ENCODE measurements at regions of chr18 and their contacts with region 1.

Region 1: GRCh38 chr18:59402432-59403090 is 43.5 kb upstream of the LMAN1 start:
- DNase-seq: peak; percentile 88
- ATAC-seq: peak; percentile 100
- H3K4me3 Mint-ChIP-seq: no peak overlapping the region
- H3K27ac Mint-ChIP-seq: no peak overlapping the region
- H3K4me1 Mint-ChIP-seq: peaks cover 5% of the 10 kb centered on the region
- H3K27me3 Mint-ChIP-seq: peaks cover 8% of the 10 kb centered on the region
- CTCF ChIP-seq: peak; percentile 71

Region 2: GRCh38 chr18:59200787-59201186 is 201.8 kb before region 1 on chr18:
- CTCF ChIA-PET with region 1: interaction called, 11 read pairs
- POLR2A ChIA-PET with region 1: no interaction called
- DNase-seq: no peak
- ATAC-seq: peak; percentile 37
- H3K4me3 Mint-ChIP-seq: no peak overlapping the region
- H3K27ac Mint-ChIP-seq: no peak overlapping the region
- H3K4me1 Mint-ChIP-seq: peaks cover 36% of the 10 kb centered on the region
- H3K27me3 Mint-ChIP-seq: no peaks in the 10 kb centered on the region; the same call in 1 of the 2 replicates
- CTCF ChIP-seq: no peak

Region 3: GRCh38 chr18:59276047-59276446 is 126.5 kb before region 1 on chr18:
- CTCF ChIA-PET with region 1: interaction called, 28 read pairs
- POLR2A ChIA-PET with region 1: no interaction called
- DNase-seq: no peak
- ATAC-seq: 0 out of 2 replicates have a peak, but pooled peaks have one; percentile 3
- H3K4me3 Mint-ChIP-seq: peak overlapping the region; percentile 16; the same call in 1 of the 2 replicates
- H3K27ac Mint-ChIP-seq: no peak overlapping the region
- H3K4me1 Mint-ChIP-seq: peaks cover 32% of the 10 kb centered on the region
- H3K27me3 Mint-ChIP-seq: peaks cover 98% of the 10 kb centered on the region
- CTCF ChIP-seq: no peak

Region 4: GRCh38 chr18:59318460-59319050 is 84.0 kb before region 1 on chr18 and contains the start of gene CPLX4:
- CTCF ChIA-PET with region 1: interaction called, 11 read pairs
- POLR2A ChIA-PET with region 1: no interaction called
- DNase-seq: no peak
- ATAC-seq: no peak
- H3K4me3 Mint-ChIP-seq: no peak within 1 kb of the TSS
- H3K27ac Mint-ChIP-seq: no peak within 1 kb of the TSS
- H3K4me1 Mint-ChIP-seq: no peaks in the 10 kb centered on the region
- H3K27me3 Mint-ChIP-seq: no peaks in the 10 kb centered on the region; the same call in none of the 2 replicates
- CTCF ChIP-seq: no peak
- total RNA-seq, gene CPLX4: not detected in 3 replicates

Region 5: GRCh38 chr18:59387687-59388565 is 14.6 kb before region 1 on chr18:
- CTCF ChIA-PET with region 1: interaction called, 28 read pairs
- POLR2A ChIA-PET with region 1: no interaction called
- DNase-seq: no peak
- ATAC-seq: no peak
- H3K4me3 Mint-ChIP-seq: no peak overlapping the region
- H3K27ac Mint-ChIP-seq: no peak overlapping the region
- H3K4me1 Mint-ChIP-seq: peaks cover 29% of the 10 kb centered on the region
- H3K27me3 Mint-ChIP-seq: peaks cover 97% of the 10 kb centered on the region
- CTCF ChIP-seq: no peak

Region 6: GRCh38 chr18:59437851-59438569 is 35.4 kb after region 1 on chr18:
- CTCF ChIA-PET with region 1: no interaction called
- POLR2A ChIA-PET with region 1: no interaction called
- DNase-seq: no peak
- ATAC-seq: peak; percentile 93
- H3K4me3 Mint-ChIP-seq: no peak overlapping the region
- H3K27ac Mint-ChIP-seq: no peak overlapping the region
- H3K4me1 Mint-ChIP-seq: no peaks in the 10 kb centered on the region
- H3K27me3 Mint-ChIP-seq: no peaks in the 10 kb centered on the region
- CTCF ChIP-seq: no peak

Region 7: GRCh38 chr18:59451963-59452362 is 49.4 kb after region 1 on chr18:
- CTCF ChIA-PET with region 1: no interaction called
- POLR2A ChIA-PET with region 1: no interaction called
- DNase-seq: no peak
- ATAC-seq: no peak
- H3K4me3 Mint-ChIP-seq: no peak overlapping the region
- H3K27ac Mint-ChIP-seq: no peak overlapping the region
- H3K4me1 Mint-ChIP-seq: peaks cover 12% of the 10 kb centered on the region
- H3K27me3 Mint-ChIP-seq: no peaks in the 10 kb centered on the region
- CTCF ChIP-seq: no peak

Region 8: GRCh38 chr18:59672235-59672711 is 269.7 kb after region 1 on chr18:
- CTCF ChIA-PET with region 1: no interaction called
- POLR2A ChIA-PET with region 1: no interaction called
- DNase-seq: no peak
- ATAC-seq: no peak
- H3K4me3 Mint-ChIP-seq: no peak overlapping the region
- H3K27ac Mint-ChIP-seq: no peak overlapping the region
- H3K4me1 Mint-ChIP-seq: no peaks in the 10 kb centered on the region
- H3K27me3 Mint-ChIP-seq: no peaks in the 10 kb centered on the region; the same call in 1 of the 2 replicates
- CTCF ChIP-seq: no peak